ENCODE measurements at regions of chr1 and their contacts with region 1.

Region 1: DNA sequence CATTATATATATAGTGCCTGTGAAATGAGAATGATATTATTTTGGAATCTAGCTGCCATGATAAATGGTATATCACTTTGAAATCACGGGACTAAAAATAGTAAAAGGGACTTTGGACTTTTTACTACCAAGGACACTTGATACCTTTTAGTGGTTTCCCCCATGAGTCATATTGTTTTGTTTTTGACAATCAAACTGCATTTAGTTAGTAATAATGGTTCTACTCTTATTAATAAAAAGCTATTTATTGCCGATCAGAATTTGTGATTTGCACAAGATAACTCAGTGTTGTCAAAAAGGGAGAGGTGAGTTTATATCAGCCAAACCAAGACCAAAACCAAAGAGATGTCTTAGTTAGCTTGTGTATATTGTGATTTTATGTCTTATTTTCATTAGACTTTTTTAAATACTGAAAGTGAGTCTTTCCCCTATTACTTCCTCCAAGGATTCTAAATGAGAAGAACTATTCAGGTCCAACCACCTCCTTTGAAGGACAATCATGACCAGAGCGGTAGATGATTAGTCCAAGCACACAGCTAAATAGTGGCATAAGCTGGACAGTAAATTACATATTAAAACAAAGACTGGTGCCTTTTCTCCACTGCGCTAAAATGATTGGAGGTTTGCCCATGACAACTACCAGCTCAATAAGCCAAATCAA is 281.7 kb upstream of the ESRRG start:
- DNase-seq: no peak
- H3K4me3 Mint-ChIP-seq: no peak overlapping the region
- H3K27ac Mint-ChIP-seq: no peak overlapping the region
- H3K4me1 Mint-ChIP-seq: no peaks in the 10 kb centered on the region
- H3K27me3 Mint-ChIP-seq: no peaks in the 10 kb centered on the region

Region 2: DNA sequence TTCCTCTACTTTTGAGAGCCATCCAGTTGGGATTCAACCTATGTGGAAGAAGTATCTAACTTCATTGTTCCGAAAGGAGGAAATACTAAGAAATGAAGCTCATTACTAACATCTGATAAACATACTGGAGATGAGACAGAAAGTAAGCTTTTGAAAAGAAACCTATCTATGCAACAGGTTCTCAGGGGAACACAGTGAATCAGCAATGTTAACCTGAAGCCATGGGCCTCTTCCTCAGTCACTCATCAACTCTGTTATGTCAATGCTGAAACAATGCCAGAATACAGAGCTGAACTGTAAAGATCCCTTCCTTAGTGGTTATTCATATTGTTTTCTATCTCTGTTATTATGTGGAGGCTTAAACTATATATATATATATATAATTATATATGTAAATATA is 226.2 kb before region 1 on chr1:
- intact Hi-C with region 1: loop called (anchors 10 kb)
- DNase-seq: no peak
- H3K4me3 Mint-ChIP-seq: no peak overlapping the region
- H3K27ac Mint-ChIP-seq: no peak overlapping the region
- H3K4me1 Mint-ChIP-seq: no peaks in the 10 kb centered on the region
- H3K27me3 Mint-ChIP-seq: no peaks in the 10 kb centered on the region

Measured in activated T-helper 2 cell treated with anti-CD3 and anti-CD28 coated beads, Interferon-gamma antibody, Interleukin-2, Interleukin-4, amounts not matched to agents 10 μg/mL and 5 μg/mL and 100 μg/mL, durations not matched to agents 14 hours and 24 hours and 36 hours (primary cell).